ENCODE measurements at regions of chr2 and their contacts with region 1.

Region 1: GRCh38 chr2:197453161-197453914 is at the start of gene COQ10B:
- DNase-seq: peak; percentile 99 to 100
- H3K4me3 ChIP-seq: peak within 1 kb of the TSS; percentile 71
- H3K4me3 Mint-ChIP-seq: peak within 1 kb of the TSS; percentile 92
- H3K27ac Mint-ChIP-seq: peak within 1 kb of the TSS; percentile 98
- H3K4me1 ChIP-seq: peaks cover 16% of the 10 kb centered on the region
- H3K4me1 Mint-ChIP-seq: peaks cover 17% of the 10 kb centered on the region
- H3K27me3 ChIP-seq: no peaks in the 10 kb centered on the region
- H3K27me3 Mint-ChIP-seq: no peaks in the 10 kb centered on the region
- CTCF ChIP-seq: peak in 1 of 2 experiments; percentile 46
- total RNA-seq, gene COQ10B: 22.5 and 25.0 TPM in 2 replicates

Region 2: GRCh38 chr2:197423307-197423706 is 30.0 kb before region 1 on chr2:
- CTCF ChIA-PET with region 1: no interaction called
- POLR2A ChIA-PET with region 1: interaction called, 3 read pairs
- intact Hi-C with region 1: loop called (anchors 1 kb)
- DNase-seq: no peak
- H3K4me3 ChIP-seq: no peak overlapping the region
- H3K4me3 Mint-ChIP-seq: no peak overlapping the region
- H3K27ac Mint-ChIP-seq: no peak overlapping the region
- H3K4me1 ChIP-seq: peaks cover 12% of the 10 kb centered on the region; the same call in 1 of the 2 replicates
- H3K4me1 Mint-ChIP-seq: peaks cover 9% of the 10 kb centered on the region
- H3K27me3 ChIP-seq: no peaks in the 10 kb centered on the region
- H3K27me3 Mint-ChIP-seq: no peaks in the 10 kb centered on the region
- CTCF ChIP-seq: no peak

Region 3: DNA sequence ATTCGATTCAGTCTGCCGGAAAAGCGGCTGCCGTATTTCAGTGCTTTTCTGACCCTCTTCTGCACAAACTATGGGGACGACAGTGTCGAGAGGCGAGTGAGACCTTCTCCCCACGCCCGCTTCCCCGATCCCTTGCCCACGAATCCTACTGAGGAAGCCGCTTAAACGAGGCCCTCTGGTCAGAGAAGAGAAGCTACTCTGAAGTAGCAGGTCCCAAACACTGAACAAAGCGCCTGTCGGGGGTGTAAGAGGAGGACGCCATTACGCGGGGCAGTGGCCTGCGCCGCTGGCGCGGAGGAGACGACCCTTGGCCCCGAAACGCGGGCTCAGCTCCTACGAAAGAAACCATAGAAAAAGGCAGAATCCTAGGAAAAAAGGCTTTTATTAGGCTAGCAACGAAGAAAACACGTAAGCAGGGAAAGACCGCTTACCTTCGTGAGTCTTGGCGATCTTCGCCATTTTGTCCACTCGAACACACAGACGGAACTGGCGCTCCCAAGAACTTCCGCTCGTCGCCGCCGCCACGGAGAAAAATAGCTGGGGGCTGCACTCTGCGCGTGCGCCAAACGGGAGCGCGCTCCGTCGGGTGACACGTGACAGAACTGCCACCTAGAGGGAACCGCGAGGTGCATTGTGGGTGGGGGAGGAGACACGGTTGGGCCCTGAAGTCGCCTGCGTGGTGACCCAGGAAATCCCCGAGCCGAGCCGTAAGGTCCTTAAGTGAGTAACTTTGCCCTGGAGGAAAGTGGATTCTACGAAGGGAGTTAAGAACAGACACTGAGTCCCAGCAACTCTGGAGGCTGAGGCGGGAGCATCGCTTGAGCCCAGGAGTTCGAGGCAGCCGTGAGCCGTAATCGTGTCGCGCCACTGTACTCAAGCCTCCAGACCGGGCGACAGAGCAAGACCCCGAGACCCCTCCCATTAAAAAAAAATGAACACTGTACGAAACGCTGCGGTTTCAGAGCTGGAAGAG is 18.5 kb before region 1 on chr2 and contains the start of gene SF3B1:
- CTCF ChIA-PET with region 1: interaction called, 3 read pairs
- POLR2A ChIA-PET with region 1: interaction called, 23 read pairs
- intact Hi-C with region 1: loop called (anchors 1 kb)
- DNase-seq: peak; percentile 98
- H3K4me3 ChIP-seq: peak within 1 kb of the TSS; percentile 89
- H3K4me3 Mint-ChIP-seq: peak within 1 kb of the TSS; percentile 92
- H3K27ac Mint-ChIP-seq: peak within 1 kb of the TSS; percentile 100
- H3K4me1 ChIP-seq: peaks cover 6% of the 10 kb centered on the region; the same call in 1 of the 2 replicates
- H3K4me1 Mint-ChIP-seq: peaks cover 12% of the 10 kb centered on the region
- H3K27me3 ChIP-seq: no peaks in the 10 kb centered on the region
- H3K27me3 Mint-ChIP-seq: no peaks in the 10 kb centered on the region
- CTCF ChIP-seq: no peak
- total RNA-seq, gene SF3B1: 273 and 274 TPM in 2 replicates

Region 4: DNA sequence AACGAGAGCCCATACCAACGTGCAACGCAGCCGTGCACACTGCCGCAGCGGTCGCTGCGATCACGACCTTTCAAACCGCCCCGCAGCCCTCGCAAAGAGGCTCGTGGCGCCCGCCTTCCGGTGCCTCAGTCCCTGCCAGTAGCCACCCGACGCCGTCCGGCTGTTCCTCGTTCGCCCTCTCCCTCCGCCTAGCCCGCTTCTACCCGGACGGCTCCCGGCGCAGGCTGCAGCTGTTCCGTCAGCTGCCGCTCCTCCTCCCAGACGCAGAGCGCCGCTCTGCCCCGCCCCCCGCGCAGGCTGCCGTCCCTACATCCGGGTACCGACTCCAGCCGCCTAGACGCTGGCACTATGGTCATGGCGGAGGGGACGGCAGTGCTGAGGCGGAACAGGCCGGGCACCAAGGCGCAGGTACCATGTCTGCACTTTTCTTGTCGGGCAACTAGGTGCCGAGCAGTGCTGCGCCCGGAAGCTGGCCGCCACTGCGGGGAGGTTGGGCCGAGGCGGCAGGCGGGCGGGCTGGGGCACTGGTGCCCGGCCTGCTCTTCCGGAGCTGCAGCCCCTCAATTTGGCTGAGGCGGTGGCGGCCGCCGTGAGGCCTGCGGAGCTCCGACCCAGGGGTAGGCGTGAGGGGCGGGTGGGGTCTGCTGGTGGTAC is 62.5 kb after region 1 on chr2 and contains the start of gene MOB4:
- CTCF ChIA-PET with region 1: interaction called, 6 read pairs
- POLR2A ChIA-PET with region 1: interaction called, 10 read pairs
- intact Hi-C with region 1: no loop called
- DNase-seq: peak; percentile 96 to 98
- H3K4me3 ChIP-seq: peak within 1 kb of the TSS; percentile 99
- H3K4me3 Mint-ChIP-seq: peak within 1 kb of the TSS; percentile 95
- H3K27ac Mint-ChIP-seq: peak within 1 kb of the TSS; percentile 91
- H3K4me1 ChIP-seq: peaks cover 15% of the 10 kb centered on the region
- H3K4me1 Mint-ChIP-seq: peaks cover 9% of the 10 kb centered on the region
- H3K27me3 ChIP-seq: no peaks in the 10 kb centered on the region
- H3K27me3 Mint-ChIP-seq: no peaks in the 10 kb centered on the region
- CTCF ChIP-seq: no peak
- total RNA-seq, gene MOB4: 27.2 and 31.1 TPM in 2 replicates

Region 5: GRCh38 chr2:197705121-197705911 is 252.0 kb after region 1 on chr2 and contains the start of gene MARS2:
- CTCF ChIA-PET with region 1: no interaction called
- POLR2A ChIA-PET with region 1: interaction called, 3 read pairs
- intact Hi-C with region 1: loop called (anchors 10 kb)
- DNase-seq: peak; percentile 92 to 94
- H3K4me3 ChIP-seq: peak within 1 kb of the TSS; percentile 86
- H3K4me3 Mint-ChIP-seq: peak within 1 kb of the TSS; percentile 90
- H3K27ac Mint-ChIP-seq: peak within 1 kb of the TSS; percentile 94
- H3K4me1 ChIP-seq: peaks cover 5% of the 10 kb centered on the region
- H3K4me1 Mint-ChIP-seq: peaks cover 12% of the 10 kb centered on the region
- H3K27me3 ChIP-seq: no peaks in the 10 kb centered on the region
- H3K27me3 Mint-ChIP-seq: peaks cover 3% of the 10 kb centered on the region
- CTCF ChIP-seq: no peak
- total RNA-seq, gene MARS2: 12.1 and 13.1 TPM in 2 replicates